ENCODE measurements at regions of chr4 and their contacts with region 1.

Region 1: GRCh38 chr4:7206911-7207567 is 14.7 kb downstream of the SORCS2 start:
- DNase-seq: peak; percentile 89 to 92 (median 91)
- H3K4me3 ChIP-seq: no peak overlapping the region
- H3K27ac ChIP-seq: peak overlapping the region; percentile 58 to 72
- H3K4me1 ChIP-seq: peaks cover 13% of the 10 kb centered on the region
- H3K27me3 ChIP-seq: no peaks in the 10 kb centered on the region
- CTCF ChIP-seq: no peak
- EP300 ChIP-seq: no peak
- POLR2A ChIP-seq: no peak

Region 2: GRCh38 chr4:7108660-7109059 is 98.4 kb before region 1 on chr4:
- intact Hi-C with region 1: no loop called
- DNase-seq: peak in 2 of 5 donors; percentile 16 to 23
- H3K4me3 ChIP-seq: no peak overlapping the region
- H3K27ac ChIP-seq: no peak overlapping the region
- H3K4me1 ChIP-seq: peaks cover under 1% of the 10 kb centered on the region
- H3K27me3 ChIP-seq: no peaks in the 10 kb centered on the region
- CTCF ChIP-seq: no peak
- EP300 ChIP-seq: no peak
- POLR2A ChIP-seq: no peak

Region 3: DNA sequence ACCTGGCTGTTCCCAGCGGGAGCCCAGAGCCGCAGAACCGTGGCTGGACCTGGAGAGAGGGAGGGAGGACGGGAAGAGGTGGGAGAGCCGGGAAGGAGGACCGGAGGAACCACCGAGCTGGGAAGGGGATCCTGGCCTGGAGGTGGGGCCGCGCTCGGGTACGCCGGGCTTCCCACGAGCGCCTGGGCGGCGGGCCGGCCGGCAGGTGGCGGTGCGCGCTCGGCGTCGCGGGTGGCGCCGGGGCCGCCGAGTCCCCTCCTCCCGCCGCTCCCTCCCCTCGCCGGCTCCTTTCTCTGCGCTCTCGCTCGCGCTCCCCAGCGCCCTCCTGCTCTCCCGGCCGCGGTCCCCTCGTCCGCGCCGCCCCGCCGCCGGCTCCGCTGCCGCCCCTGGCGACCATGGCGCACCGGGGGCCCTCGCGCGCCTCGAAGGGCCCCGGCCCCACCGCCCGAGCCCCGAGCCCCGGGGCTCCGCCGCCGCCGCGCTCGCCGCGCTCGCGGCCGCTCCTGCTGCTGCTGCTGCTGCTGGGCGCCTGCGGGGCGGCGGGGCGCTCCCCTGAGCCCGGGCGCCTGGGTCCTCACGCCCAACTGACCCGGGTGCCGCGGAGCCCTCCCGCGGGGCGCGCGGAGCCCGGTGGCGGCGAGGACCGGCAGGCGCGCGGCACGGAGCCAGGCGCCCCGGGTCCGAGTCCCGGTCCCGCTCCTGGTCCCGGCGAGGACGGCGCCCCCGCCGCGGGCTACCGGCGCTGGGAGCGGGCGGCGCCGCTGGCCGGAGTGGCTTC is 14.6 kb before region 1 on chr4 and contains the start of gene SORCS2:
- intact Hi-C with region 1: no loop called
- DNase-seq: peak; percentile 73 to 88 (median 81)
- H3K4me3 ChIP-seq: peak within 1 kb of the TSS; percentile 32
- H3K27ac ChIP-seq: peak within 1 kb of the TSS; percentile 28 to 32
- H3K4me1 ChIP-seq: peaks cover 8% of the 10 kb centered on the region
- H3K27me3 ChIP-seq: no peaks in the 10 kb centered on the region
- CTCF ChIP-seq: peak in 2 of 3 donors; percentile 92 to 93
- EP300 ChIP-seq: no peak
- POLR2A ChIP-seq: no peak
- total RNA-seq, gene SORCS2: 0.60 to 23.9 (median 7.1) TPM

Region 4: GRCh38 chr4:7254736-7255487 is 47.9 kb after region 1 on chr4:
- intact Hi-C with region 1: loop called in 1 of 4 experiments (anchors 5 kb)
- DNase-seq: no peak
- H3K4me3 ChIP-seq: no peak overlapping the region
- H3K27ac ChIP-seq: no peak overlapping the region
- H3K4me1 ChIP-seq: peaks cover 5% of the 10 kb centered on the region
- H3K27me3 ChIP-seq: no peaks in the 10 kb centered on the region
- CTCF ChIP-seq: no peak
- EP300 ChIP-seq: no peak
- POLR2A ChIP-seq: no peak

Region 5: GRCh38 chr4:7434766-7435150 is 227.7 kb after region 1 on chr4 and contains the start of gene PSAPL1:
- intact Hi-C with region 1: no loop called
- DNase-seq: peak in 3 of 5 donors; percentile 56 to 81 (median 58)
- H3K4me3 ChIP-seq: no peak within 1 kb of the TSS
- H3K27ac ChIP-seq: no peak within 1 kb of the TSS
- H3K4me1 ChIP-seq: peaks cover 10% of the 10 kb centered on the region
- H3K27me3 ChIP-seq: no peaks in the 10 kb centered on the region
- CTCF ChIP-seq: no peak
- EP300 ChIP-seq: no peak
- POLR2A ChIP-seq: no peak
- total RNA-seq, gene PSAPL1: 0.34 TPM in 1 of 7 donors, not detected in the others